Activated naive CD4-positive, alpha-beta T cell treated with anti-CD3 and anti-CD28 coated beads for 36 hours (primary cell): ENCODE measurements at regions of chr10 and their contacts with region 1.

Region 1: GRCh38 chr10:102352066-102352715 is 43.3 kb upstream of the NFKB2 start:
- DNase-seq: peak; percentile 87
- H3K4me3 Mint-ChIP-seq: no peak overlapping the region
- H3K27ac Mint-ChIP-seq: no peak overlapping the region
- H3K4me1 Mint-ChIP-seq: no peaks in the 10 kb centered on the region
- H3K27me3 Mint-ChIP-seq: no peaks in the 10 kb centered on the region

Region 2: DNA sequence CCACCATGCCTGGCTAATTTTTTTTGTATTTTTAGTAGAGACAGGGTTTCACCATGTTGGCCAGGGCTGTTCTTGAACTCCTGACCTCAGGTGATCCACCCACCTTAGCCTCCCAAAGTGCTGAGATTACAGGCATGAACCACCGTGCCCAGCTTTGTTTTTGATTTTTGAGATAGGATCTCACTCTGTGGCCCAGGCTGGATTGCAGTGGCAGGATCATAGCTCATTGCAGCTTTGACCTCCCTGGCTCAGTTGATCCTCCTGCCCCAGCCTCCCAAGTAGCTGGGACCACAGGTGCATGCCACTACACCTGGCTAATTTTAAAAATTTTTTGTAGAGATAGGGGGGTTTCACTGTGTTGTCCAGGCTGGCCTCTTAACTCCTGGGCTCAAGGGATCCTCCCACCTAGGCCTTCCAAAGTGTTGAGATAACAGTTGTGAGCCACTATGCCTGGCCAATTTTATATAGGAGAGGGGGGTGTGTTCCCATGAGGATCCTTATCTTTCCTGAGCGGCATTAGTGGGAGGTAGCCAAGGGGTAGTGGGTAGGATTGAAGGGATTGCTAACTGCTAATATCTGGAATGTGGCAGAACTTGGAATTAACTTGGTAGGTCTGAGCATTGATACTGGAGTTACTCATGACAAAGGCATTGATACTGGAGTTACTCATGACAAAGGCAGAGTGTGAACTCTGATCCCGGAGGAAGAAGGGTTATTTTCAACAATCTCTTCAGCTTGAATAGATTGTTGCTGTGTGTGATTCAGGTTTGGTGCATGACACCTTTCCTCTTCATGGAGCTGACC is 201.0 kb before region 1 on chr10:
- CTCF ChIA-PET with region 1: no interaction called
- intact Hi-C with region 1: no loop called
- DNase-seq: no peak
- H3K4me3 Mint-ChIP-seq: peak overlapping the region; percentile 98
- H3K27ac Mint-ChIP-seq: peak overlapping the region; percentile 96
- H3K4me1 Mint-ChIP-seq: peaks cover 45% of the 10 kb centered on the region
- H3K27me3 Mint-ChIP-seq: no peaks in the 10 kb centered on the region

Region 3: DNA sequence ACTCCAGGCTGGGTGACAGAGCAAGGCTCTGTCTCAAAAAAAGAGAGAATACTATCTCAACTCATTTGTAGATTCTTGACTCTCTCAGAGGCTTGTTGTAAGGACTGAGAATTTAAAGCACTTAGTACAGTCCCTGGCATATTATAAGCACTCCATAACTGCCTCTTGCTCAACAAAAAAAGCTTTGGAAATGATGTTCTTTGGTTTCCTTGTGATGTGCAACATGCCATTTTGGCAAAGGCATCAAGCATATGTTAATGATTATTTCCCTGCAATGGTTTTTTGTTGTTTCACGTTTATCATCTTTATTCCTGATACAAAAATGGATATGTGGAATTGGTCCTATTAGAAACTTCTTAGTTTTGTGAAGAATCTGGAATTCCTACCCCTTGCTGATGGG is 184.3 kb before region 1 on chr10:
- CTCF ChIA-PET with region 1: interaction called, 71 read pairs
- intact Hi-C with region 1: loop called (anchors 1 kb)
- DNase-seq: no peak
- H3K4me3 Mint-ChIP-seq: no peak overlapping the region
- H3K27ac Mint-ChIP-seq: no peak overlapping the region
- H3K4me1 Mint-ChIP-seq: peaks cover 10% of the 10 kb centered on the region
- H3K27me3 Mint-ChIP-seq: no peaks in the 10 kb centered on the region

Region 4: DNA sequence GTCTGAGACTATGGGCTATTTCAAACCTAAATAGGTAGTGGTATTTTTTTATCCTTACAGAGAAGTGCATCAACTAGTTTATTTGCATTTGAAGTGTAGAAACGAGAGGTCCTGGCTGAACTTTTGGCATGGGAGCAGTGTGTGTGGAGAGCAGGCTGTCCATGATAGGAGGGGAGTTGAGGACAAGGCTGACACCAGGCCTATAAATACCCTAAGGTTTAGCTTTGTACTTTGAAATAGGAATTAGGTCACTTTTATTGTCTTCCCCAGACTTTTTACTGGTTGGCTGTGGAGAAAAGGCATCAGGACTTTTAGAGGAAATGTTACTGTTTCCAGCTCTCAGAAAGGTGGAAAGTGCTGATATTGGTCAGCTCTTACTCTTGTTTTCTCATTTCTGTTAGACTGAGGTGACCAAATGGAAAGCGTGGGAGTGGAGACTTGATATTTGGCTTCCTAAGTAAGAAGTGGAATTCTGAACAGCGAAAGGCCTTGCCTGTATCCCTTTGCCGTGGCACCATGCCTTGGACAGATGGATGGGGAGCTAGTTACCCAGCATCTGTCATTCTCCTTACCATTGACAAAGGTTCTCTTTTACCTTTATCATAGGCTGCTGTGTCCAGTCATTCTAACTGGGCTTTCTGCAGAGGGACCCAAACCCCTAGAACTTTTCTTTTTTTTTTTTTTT is 60.8 kb before region 1 on chr10:
- CTCF ChIA-PET with region 1: interaction called, 11 read pairs
- intact Hi-C with region 1: no loop called
- DNase-seq: no peak
- H3K4me3 Mint-ChIP-seq: no peak overlapping the region
- H3K27ac Mint-ChIP-seq: no peak overlapping the region
- H3K4me1 Mint-ChIP-seq: peaks cover 17% of the 10 kb centered on the region
- H3K27me3 Mint-ChIP-seq: no peaks in the 10 kb centered on the region

Region 5: DNA sequence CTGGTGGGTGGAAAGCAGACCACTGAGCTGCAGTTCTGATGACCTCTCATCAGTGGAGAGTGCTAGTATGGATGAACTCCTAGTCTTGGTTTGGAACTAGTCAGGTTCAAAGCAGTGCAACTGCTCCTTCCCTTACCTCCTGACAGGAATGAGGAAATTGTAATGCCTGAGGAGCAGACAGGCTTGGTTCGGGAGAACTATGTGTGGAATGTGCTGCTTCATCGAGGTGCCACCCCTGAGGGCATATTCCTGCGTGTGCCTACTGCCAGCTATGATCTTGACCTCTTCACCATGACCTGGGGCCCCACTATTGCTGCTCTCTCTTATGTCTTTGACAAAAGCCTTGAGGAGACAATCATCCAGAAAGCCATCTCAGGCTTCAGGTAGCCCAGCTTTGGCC is 15.9 kb after region 1 on chr10:
- CTCF ChIA-PET with region 1: interaction called, 51 read pairs
- intact Hi-C with region 1: no loop called
- DNase-seq: no peak
- H3K4me3 Mint-ChIP-seq: no peak overlapping the region
- H3K27ac Mint-ChIP-seq: no peak overlapping the region
- H3K4me1 Mint-ChIP-seq: no peaks in the 10 kb centered on the region
- H3K27me3 Mint-ChIP-seq: no peaks in the 10 kb centered on the region

Region 6: DNA sequence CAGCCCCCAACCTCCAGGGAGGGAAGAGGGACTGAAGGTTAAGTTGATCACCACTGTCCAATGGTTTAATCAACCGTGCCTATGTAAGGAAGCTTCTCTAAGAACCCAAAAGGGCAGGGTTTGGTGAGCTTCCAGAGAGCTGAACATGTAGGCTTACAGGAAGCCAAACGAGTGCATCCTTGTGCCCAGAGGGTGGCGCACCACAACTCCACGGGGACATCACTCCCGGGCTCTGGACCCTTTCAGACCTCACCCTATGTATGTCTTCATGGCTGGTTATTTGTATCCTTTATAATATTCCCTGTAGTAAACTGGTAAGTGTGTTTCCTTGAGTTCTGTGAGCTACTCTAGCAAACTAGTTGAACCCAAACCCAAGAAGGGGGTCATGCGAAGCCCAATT is 31.9 kb after region 1 on chr10:
- CTCF ChIA-PET with region 1: interaction called, 17 read pairs
- intact Hi-C with region 1: no loop called
- DNase-seq: peak; percentile 49
- H3K4me3 Mint-ChIP-seq: no peak overlapping the region
- H3K27ac Mint-ChIP-seq: no peak overlapping the region
- H3K4me1 Mint-ChIP-seq: peaks cover 10% of the 10 kb centered on the region
- H3K27me3 Mint-ChIP-seq: no peaks in the 10 kb centered on the region

Region 7: DNA sequence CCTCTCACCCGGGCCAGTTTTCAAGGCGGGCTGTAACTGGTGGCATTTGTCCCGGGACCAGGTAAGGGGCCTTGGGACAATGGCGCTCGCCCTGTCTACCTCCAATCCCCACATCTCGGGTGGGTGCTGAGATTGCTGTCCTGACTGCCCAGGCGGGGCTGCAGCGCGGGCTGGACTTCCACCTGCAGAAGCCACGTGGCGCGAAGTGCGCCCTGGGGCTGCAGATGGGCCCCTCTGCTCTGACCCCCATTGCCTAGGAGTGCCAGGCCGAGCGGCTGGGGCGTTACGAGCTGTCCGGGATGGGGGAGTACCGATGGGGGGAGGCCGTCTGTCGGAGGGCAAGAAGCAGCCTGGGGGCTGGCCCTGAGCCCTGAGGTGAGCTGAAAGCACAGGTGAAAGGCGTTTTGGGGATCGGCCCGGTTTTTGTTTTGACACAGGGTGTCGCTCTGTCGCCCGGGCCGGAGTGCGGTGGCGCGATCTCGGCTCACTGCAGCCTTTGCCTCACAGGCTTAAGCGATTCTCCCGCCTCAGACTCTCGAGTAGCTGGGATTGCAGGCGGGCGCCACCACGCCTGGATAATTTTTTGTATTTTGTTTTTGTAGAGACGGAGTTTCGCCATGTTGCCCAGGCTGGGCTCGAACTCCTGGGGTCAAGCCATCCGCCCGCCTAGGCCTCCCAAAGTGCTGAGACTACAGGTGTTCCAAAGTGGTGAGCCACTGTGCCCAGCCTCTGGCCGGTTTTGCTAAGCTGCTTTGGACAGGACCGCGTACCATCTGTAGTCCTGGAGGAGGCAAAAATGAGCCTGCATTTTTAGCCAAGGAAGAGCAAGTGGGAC is 362.6 kb after region 1 on chr10 and contains the start of gene SFXN2:
- CTCF ChIA-PET with region 1: no interaction called
- intact Hi-C with region 1: no loop called
- DNase-seq: peak; percentile 72
- H3K4me3 Mint-ChIP-seq: peak within 1 kb of the TSS; percentile 92
- H3K27ac Mint-ChIP-seq: peak within 1 kb of the TSS; percentile 79
- H3K4me1 Mint-ChIP-seq: peaks cover 48% of the 10 kb centered on the region
- H3K27me3 Mint-ChIP-seq: no peaks in the 10 kb centered on the region
- total RNA-seq, gene SFXN2: 8.7 to 9.4 TPM